SK-N-SH (cell line): ENCODE measurements at regions of chr19 and their contacts with region 1.

Region 1: GRCh38 chr19:5987077-5987818 is 9.3 kb upstream of the RANBP3 start:
- DNase-seq: peak; percentile 79
- H3K4me3 ChIP-seq: peak overlapping the region in 1 of 2 experiments; percentile 9; a peak in 1 of 4 replicates
- H3K27ac ChIP-seq: no peak overlapping the region
- H3K4me1 ChIP-seq: peaks cover 3 to 9% of the 10 kb centered on the region in 2 experiments; a peak in 2 of 4 replicates
- H3K27me3 ChIP-seq: no peaks in the 10 kb centered on the region
- CTCF ChIP-seq: peak; percentile 92
- EP300 ChIP-seq: no peak
- RAD21 ChIP-seq: peak; percentile 94

Region 2: GRCh38 chr19:5727453-5728050 is 259.7 kb before region 1 on chr19:
- CTCF ChIA-PET with region 1: no interaction called
- POLR2A ChIA-PET with region 1: no interaction called
- DNase-seq: no peak
- H3K4me3 ChIP-seq: no peak overlapping the region
- H3K27ac ChIP-seq: no peak overlapping the region
- H3K4me1 ChIP-seq: no peaks in the 10 kb centered on the region
- H3K27me3 ChIP-seq: no peaks in the 10 kb centered on the region; the same call in none of the 2 replicates
- CTCF ChIP-seq: no peak
- EP300 ChIP-seq: no peak
- RAD21 ChIP-seq: no peak

Region 3: DNA sequence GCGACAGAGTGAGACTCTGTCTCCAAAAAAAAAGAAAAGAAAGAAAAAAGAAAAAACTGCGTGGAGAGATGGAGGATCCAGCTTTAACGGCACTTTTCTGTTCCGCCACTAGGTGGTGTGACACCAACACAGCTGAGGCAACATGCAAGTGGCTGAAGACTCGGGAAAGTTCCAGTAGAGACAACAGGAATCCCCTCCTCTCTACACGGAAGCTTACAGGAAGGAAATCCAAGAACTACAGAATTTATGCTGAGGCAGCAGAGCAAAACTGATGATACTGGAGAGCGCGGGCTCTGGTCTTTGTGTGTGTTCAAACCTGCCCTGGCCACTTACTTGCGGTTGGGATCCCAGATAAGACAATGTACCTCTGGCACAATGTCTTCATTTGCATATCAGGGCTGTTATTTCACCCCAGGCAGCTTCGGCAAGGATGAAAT is 19.2 kb before region 1 on chr19:
- CTCF ChIA-PET with region 1: interaction called, 19 read pairs
- POLR2A ChIA-PET with region 1: no interaction called
- DNase-seq: peak; percentile 79
- H3K4me3 ChIP-seq: no peak overlapping the region
- H3K27ac ChIP-seq: peak overlapping the region in 1 of 2 experiments; percentile 73; a peak in 2 of 4 replicates
- H3K4me1 ChIP-seq: peaks cover 0 to 25% of the 10 kb centered on the region in 2 experiments; a peak in 1 of 4 replicates
- H3K27me3 ChIP-seq: no peaks in the 10 kb centered on the region
- CTCF ChIP-seq: peak; percentile 88
- EP300 ChIP-seq: peak in 1 of 2 experiments; percentile 62; a peak in 2 of 4 replicates
- RAD21 ChIP-seq: peak; percentile 66

Region 4: GRCh38 chr19:6005321-6006069 is 18.2 kb after region 1 on chr19:
- CTCF ChIA-PET with region 1: interaction called, 14 read pairs
- POLR2A ChIA-PET with region 1: no interaction called
- DNase-seq: peak; percentile 20
- H3K4me3 ChIP-seq: no peak overlapping the region
- H3K27ac ChIP-seq: no peak overlapping the region
- H3K4me1 ChIP-seq: no peaks in the 10 kb centered on the region
- H3K27me3 ChIP-seq: no peaks in the 10 kb centered on the region
- CTCF ChIP-seq: no peak
- EP300 ChIP-seq: no peak
- RAD21 ChIP-seq: no peak

Region 5: GRCh38 chr19:6030214-6030507 is 42.9 kb after region 1 on chr19:
- CTCF ChIA-PET with region 1: interaction called, 48 read pairs
- POLR2A ChIA-PET with region 1: no interaction called
- DNase-seq: no peak
- H3K4me3 ChIP-seq: no peak overlapping the region
- H3K27ac ChIP-seq: no peak overlapping the region
- H3K4me1 ChIP-seq: no peaks in the 10 kb centered on the region
- H3K27me3 ChIP-seq: no peaks in the 10 kb centered on the region
- CTCF ChIP-seq: no peak
- EP300 ChIP-seq: no peak
- RAD21 ChIP-seq: no peak

Region 6: GRCh38 chr19:6125571-6125989 is 138.3 kb after region 1 on chr19:
- CTCF ChIA-PET with region 1: interaction called, 15 read pairs
- POLR2A ChIA-PET with region 1: no interaction called
- DNase-seq: peak; percentile 66
- H3K4me3 ChIP-seq: no peak overlapping the region
- H3K27ac ChIP-seq: no peak overlapping the region
- H3K4me1 ChIP-seq: no peaks in the 10 kb centered on the region
- H3K27me3 ChIP-seq: no peaks in the 10 kb centered on the region
- CTCF ChIP-seq: peak; percentile 96
- EP300 ChIP-seq: no peak
- RAD21 ChIP-seq: peak; percentile 86